Motor neuron (in vitro differentiated cells): ENCODE measurements at regions of chr10 and their contacts with region 1.

Region 1: GRCh38 chr10:25232204-25232603 is 57.4 kb downstream of the GPR158 start:
- ATAC-seq: no peak
- H3K4me3 ChIP-seq: no peak overlapping the region
- H3K27ac ChIP-seq: no peak overlapping the region
- H3K4me1 ChIP-seq: peaks cover 0 to 2% of the 10 kb centered on the region in 2 donors

Region 2: GRCh38 chr10:25049966-25050365 is 182.2 kb before region 1 on chr10:
- in situ Hi-C with region 1: no loop called
- ATAC-seq: no peak
- H3K4me3 ChIP-seq: no peak overlapping the region
- H3K27ac ChIP-seq: no peak overlapping the region
- H3K4me1 ChIP-seq: no peaks in the 10 kb centered on the region

Region 3: DNA sequence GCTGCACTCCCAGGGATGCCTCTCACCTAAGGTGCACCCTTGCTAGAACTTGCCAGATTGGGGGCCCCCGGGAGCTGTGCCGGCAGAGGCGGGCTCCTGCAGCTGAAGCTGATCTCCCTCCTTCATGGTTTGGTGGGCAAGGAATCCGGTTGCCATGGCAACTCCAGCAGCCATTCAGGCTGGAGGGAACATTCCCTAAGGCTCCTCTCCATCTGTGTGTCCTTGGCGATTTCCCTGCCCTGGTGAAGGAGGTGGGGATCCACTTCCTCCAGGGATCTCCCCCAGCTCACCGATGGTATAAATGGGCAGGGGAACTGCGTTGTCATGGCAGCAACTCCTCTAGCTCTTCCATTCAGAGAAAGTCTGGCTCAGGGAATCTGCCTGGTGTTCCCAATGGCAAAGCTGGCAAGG is 107.0 kb before region 1 on chr10:
- in situ Hi-C with region 1: loop called in 2 of 9 experiments (anchors 10 to 25 kb)
- ATAC-seq: peak in 5 of 8 experiments; percentile 64 to 79 (median 71)
- H3K4me3 ChIP-seq: no peak overlapping the region
- H3K27ac ChIP-seq: no peak overlapping the region
- H3K4me1 ChIP-seq: peaks cover 5 to 19% of the 10 kb centered on the region in 2 donors

Region 4: GRCh38 chr10:25582961-25583360 is 350.8 kb after region 1 on chr10:
- in situ Hi-C with region 1: no loop called
- ATAC-seq: no peak
- H3K4me3 ChIP-seq: no peak overlapping the region
- H3K27ac ChIP-seq: no peak overlapping the region
- H3K4me1 ChIP-seq: no peaks in the 10 kb centered on the region